Activated T-helper 1 cell treated with anti-CD3 and anti-CD28 coated beads, Interleukin-12 subunit alpha, Interleukin-12 subunit beta, Interleukin-2, Interleukin-4 antibody, amounts not matched to agents 30 ng/mL and 10 ng/mL and 1 ng/mL, durations not matched to agents 14 hours and 24 hours and 36 hours (primary cell): ENCODE measurements at regions of chr18 and their contacts with region 1.

Region 1: GRCh38 chr18:79523736-79524180 is 128.0 kb downstream of the NFATC1 start:
- DNase-seq: peak; percentile 55
- H3K4me3 Mint-ChIP-seq: peak overlapping the region; percentile 79
- H3K27ac Mint-ChIP-seq: peak overlapping the region; percentile 98
- H3K4me1 Mint-ChIP-seq: peaks cover 64% of the 10 kb centered on the region
- H3K27me3 Mint-ChIP-seq: peaks cover 2% of the 10 kb centered on the region

Region 2: DNA sequence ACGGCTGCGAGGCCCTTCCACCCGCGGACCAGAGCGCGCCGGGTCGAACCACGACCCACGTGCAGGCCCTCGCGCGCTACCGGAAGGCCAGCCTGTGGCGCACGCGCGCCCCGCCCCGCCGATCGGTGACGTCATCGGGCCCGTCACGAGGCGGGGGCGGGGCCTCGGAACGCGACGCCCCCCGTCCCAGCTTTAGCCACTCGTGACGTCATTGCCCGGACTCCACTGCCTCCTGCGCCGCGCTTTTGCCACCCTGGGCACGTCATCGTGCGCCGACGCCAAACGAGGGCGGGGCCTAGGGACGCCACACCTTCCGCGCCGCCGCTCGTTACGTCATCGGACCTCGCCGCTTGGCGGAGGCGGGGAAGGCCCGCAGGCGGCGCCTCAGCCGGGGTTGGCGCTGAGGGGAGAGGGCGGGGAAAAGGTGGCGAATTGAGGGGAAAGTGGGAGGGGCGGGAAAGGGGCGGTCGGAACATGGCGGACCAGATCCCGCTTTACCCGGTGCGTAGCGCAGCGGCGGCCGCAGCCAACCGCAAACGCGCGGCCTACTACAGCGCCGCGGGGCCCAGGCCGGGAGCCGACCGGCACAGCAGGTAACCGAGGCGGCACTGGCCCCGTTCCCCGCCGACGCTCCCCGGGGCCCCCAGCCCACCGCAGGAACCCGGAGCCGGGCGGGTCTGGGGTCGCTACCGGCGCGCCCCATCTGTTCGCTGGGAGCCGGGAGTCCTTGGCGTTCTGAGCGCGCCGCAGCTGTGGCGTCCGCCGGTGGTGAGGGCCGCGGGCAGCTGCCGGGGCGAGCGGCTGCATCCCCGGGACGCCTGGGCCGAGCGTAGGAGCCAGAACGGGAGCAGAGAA is 454.6 kb before region 1 on chr18 and contains the start of gene ATP9B:
- intact Hi-C with region 1: loop called (anchors 5 kb)
- DNase-seq: peak; percentile 99
- H3K4me3 Mint-ChIP-seq: peak within 1 kb of the TSS; percentile 89
- H3K27ac Mint-ChIP-seq: peak within 1 kb of the TSS; percentile 98
- H3K4me1 Mint-ChIP-seq: peaks cover 38% of the 10 kb centered on the region
- H3K27me3 Mint-ChIP-seq: peaks cover 9% of the 10 kb centered on the region
- total RNA-seq, gene ATP9B: 26.1 and 31.4 TPM in 2 replicates

Region 3: GRCh38 chr18:79393635-79394533 is 129.9 kb before region 1 on chr18:
- intact Hi-C with region 1: loop called (anchors 1 kb)
- DNase-seq: peak; percentile 31
- H3K4me3 Mint-ChIP-seq: peak overlapping the region; percentile 85
- H3K27ac Mint-ChIP-seq: peak overlapping the region; percentile 90
- H3K4me1 Mint-ChIP-seq: peaks cover 21% of the 10 kb centered on the region
- H3K27me3 Mint-ChIP-seq: peaks cover 24% of the 10 kb centered on the region

Region 4: GRCh38 chr18:79405781-79406575 is 117.8 kb before region 1 on chr18:
- intact Hi-C with region 1: loop called (anchors 1 kb)
- DNase-seq: peak; percentile 84
- H3K4me3 Mint-ChIP-seq: peak overlapping the region; percentile 84
- H3K27ac Mint-ChIP-seq: peak overlapping the region; percentile 97
- H3K4me1 Mint-ChIP-seq: peaks cover 57% of the 10 kb centered on the region
- H3K27me3 Mint-ChIP-seq: no peaks in the 10 kb centered on the region

Region 5: GRCh38 chr18:79507076-79507545 is 16.6 kb before region 1 on chr18:
- intact Hi-C with region 1: loop called (anchors 2 kb)
- DNase-seq: no peak
- H3K4me3 Mint-ChIP-seq: peak overlapping the region; percentile 54
- H3K27ac Mint-ChIP-seq: peak overlapping the region; percentile 75
- H3K4me1 Mint-ChIP-seq: peaks cover 53% of the 10 kb centered on the region
- H3K27me3 Mint-ChIP-seq: no peaks in the 10 kb centered on the region

Region 6: GRCh38 chr18:80034068-80034851 is 510.5 kb after region 1 on chr18 and contains the start of gene RBFA:
- intact Hi-C with region 1: loop called (anchors 2 kb)
- DNase-seq: peak; percentile 98
- H3K4me3 Mint-ChIP-seq: peak within 1 kb of the TSS; percentile 87
- H3K27ac Mint-ChIP-seq: peak within 1 kb of the TSS; percentile 88
- H3K4me1 Mint-ChIP-seq: peaks cover 25% of the 10 kb centered on the region
- H3K27me3 Mint-ChIP-seq: peaks cover 4% of the 10 kb centered on the region
- total RNA-seq, gene RBFA: 48.5 and 50.3 TPM in 2 replicates